ENCODE measurements at regions of chr15 and their contacts with region 1.

Region 1: DNA sequence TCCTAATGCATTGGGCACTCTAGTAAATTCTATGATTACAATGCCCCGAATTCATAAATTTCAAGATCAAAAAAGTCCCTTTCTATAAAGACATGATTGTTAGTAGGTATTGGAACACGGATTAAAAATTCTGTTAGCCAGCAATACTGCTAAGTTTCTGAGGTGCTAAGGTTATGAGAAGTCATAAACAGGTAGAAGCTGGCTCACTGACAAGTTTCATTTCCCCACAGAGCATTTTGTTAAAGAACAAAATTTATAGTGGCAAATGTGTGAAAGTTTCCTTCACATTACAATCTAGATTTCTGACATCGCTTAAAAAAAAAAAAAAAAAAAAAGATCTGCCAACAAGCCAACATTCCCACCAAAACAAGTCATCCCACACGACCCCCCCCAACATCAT is 12.4 kb upstream of the MAN2C1 start:
- DNase-seq: no peak
- ATAC-seq: no peak
- H3K4me3 Mint-ChIP-seq: no peak overlapping the region
- H3K27ac Mint-ChIP-seq: peak overlapping the region; percentile 66
- H3K4me1 Mint-ChIP-seq: peaks cover 4% of the 10 kb centered on the region
- H3K27me3 Mint-ChIP-seq: no peaks in the 10 kb centered on the region

Region 2: DNA sequence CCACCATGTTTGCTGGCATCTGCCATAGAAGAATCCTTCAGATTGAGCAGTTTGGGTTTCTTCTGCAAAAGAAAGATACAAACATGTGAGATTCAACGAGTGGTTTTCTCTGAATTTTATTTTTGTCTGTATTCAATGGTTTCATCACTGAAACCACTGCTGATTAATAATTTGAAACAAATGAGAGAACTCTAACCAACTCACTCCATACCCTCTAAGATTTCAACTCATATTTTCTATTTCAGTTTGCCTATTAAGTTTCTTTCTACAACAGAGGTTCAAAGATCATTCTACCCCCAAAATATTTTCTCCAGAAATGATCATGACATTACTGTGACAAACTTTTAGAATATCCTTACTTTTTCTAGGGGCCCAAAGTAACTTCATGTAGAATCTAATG is 26.3 kb after region 1 on chr15:
- CTCF ChIA-PET with region 1: no interaction called
- POLR2A ChIA-PET with region 1: no interaction called
- intact Hi-C with region 1: no loop called
- DNase-seq: no peak
- ATAC-seq: peak; percentile 56
- H3K4me3 Mint-ChIP-seq: no peak overlapping the region
- H3K27ac Mint-ChIP-seq: peak overlapping the region; percentile 68
- H3K4me1 Mint-ChIP-seq: peaks cover 34% of the 10 kb centered on the region
- H3K27me3 Mint-ChIP-seq: no peaks in the 10 kb centered on the region

Region 3: DNA sequence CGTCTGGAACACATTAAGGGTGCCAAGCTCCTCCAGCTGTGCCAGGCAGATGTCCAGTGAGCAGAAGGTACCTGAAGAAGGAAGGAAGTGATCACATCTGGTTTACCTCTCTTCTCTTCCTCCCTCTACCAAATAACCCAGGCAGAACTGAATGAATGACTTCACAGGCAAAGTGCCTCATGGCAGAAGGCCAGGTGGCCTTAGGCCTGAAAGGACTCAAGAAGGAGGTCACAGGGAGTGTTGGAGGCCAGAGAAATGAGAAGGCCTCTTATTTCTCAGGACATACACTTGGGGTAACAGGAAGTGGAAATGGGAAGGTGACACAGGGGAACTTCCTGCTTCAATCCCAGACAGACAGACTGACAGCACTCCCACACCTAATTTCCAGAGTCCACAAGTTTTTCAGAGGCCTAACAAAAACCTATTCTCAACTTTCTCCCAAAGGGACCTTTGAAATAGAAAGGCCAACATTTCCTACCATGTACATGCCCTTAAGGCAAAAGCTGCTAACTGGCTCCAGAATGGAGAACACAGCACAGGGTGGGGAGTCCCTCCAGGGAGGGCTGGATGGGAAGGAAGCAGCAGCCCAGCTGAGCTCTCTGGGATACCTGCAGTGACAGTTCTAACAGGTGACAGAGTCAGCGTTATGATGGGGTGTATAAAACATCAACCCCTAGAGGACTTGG is 88.3 kb after region 1 on chr15:
- CTCF ChIA-PET with region 1: no interaction called
- POLR2A ChIA-PET with region 1: interaction called, 11 read pairs
- intact Hi-C with region 1: no loop called
- DNase-seq: no peak
- ATAC-seq: no peak
- H3K4me3 Mint-ChIP-seq: no peak overlapping the region
- H3K27ac Mint-ChIP-seq: peak overlapping the region; percentile 23
- H3K4me1 Mint-ChIP-seq: no peaks in the 10 kb centered on the region
- H3K27me3 Mint-ChIP-seq: no peaks in the 10 kb centered on the region

Measured in activated CD4-positive, alpha-beta T cell treated with anti-CD3 and anti-CD28 coated beads for 36 hours (primary cell).